ENCODE measurements at regions of chr2 and their contacts with region 1.

Region 1: GRCh38 chr2:232327105-232328041 is 51.2 kb upstream of the ALPP start:
- DNase-seq: peak; percentile 96
- H3K4me3 Mint-ChIP-seq: no peak overlapping the region
- H3K27ac Mint-ChIP-seq: no peak overlapping the region
- H3K4me1 Mint-ChIP-seq: peaks cover 6% of the 10 kb centered on the region
- H3K27me3 Mint-ChIP-seq: no peaks in the 10 kb centered on the region

Region 2: DNA sequence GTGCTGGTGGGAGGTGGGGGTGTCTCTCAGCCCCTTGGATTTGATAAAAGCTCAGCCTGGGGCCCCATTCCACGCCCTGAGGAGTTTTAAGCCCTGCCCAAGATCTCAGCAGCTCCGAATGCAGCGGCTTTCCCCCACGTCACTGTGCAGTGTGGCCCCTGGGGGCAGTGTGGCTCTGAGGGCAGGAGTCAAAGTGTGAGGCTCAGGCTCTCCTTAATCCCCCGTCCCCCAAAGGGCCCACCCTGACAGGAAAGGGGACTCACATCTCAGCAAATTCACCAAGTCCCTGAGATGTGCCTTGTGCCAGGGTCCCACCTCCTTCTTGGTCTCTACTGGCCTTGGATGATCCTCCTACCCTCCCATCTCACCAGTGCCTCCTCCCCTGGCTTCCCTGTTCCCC is 426.4 kb before region 1 on chr2:
- intact Hi-C with region 1: loop called (anchors 1 kb)
- DNase-seq: no peak
- H3K4me3 Mint-ChIP-seq: no peak overlapping the region
- H3K27ac Mint-ChIP-seq: no peak overlapping the region
- H3K4me1 Mint-ChIP-seq: no peaks in the 10 kb centered on the region
- H3K27me3 Mint-ChIP-seq: peaks cover 6% of the 10 kb centered on the region

Region 3: DNA sequence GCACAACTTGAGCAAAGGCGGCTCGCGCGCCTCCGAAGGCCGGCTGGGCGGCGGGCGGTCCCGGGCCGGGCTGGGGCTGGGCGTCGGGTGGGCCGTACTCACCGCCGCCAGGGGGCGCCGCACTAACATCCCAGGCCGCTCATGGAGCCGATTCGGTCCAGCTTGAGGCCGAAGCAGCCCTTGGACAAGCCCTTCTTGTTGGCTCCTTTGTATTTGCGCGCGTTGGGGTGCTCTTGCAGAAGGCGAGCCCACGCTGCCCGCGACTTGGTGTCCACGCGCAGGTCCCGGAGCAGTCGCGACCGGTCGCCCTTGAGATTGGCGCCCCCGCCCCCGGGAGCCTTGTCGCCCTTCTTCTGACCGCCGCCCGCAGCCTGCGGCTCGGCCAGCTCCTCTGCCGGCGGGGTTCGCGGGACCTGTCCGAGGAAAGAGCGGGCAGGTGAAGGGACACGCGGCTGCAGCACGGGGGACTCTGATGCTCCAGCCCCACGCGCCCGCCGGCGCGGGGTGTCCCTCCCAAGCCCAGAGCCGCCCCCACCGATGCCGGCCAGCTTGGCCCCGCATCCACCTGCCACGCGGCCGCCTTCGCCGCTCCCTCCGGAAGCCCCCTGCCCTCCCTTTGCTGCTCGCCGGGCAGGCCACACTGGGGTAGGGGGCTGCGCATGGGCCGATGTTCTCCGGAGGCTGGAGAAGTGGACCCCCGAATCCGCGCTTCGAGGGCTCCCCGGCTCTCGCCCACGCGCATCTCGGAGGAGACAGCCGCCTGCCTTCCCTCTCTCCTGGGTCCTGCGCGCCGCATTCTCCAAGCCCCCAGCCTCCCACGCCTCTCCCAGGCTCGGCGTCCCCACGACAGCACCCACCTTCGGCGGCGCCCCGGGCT is 401.8 kb before region 1 on chr2:
- intact Hi-C with region 1: loop called (anchors 1 kb)
- DNase-seq: peak; percentile 91
- H3K4me3 Mint-ChIP-seq: peak overlapping the region; percentile 51
- H3K27ac Mint-ChIP-seq: no peak overlapping the region
- H3K4me1 Mint-ChIP-seq: peaks cover 10% of the 10 kb centered on the region
- H3K27me3 Mint-ChIP-seq: peaks cover 53% of the 10 kb centered on the region

Region 4: GRCh38 chr2:232365621-232366321 is 38.4 kb after region 1 on chr2:
- intact Hi-C with region 1: no loop called
- DNase-seq: peak; percentile 78
- H3K4me3 Mint-ChIP-seq: no peak overlapping the region
- H3K27ac Mint-ChIP-seq: no peak overlapping the region
- H3K4me1 Mint-ChIP-seq: peaks cover 18% of the 10 kb centered on the region
- H3K27me3 Mint-ChIP-seq: no peaks in the 10 kb centered on the region

Measured in activated CD4-positive, alpha-beta T cell treated with anti-CD3 and anti-CD28 coated beads, Interleukin-2, amount 10 ng/mL, durations not matched to agents 24 days and 14 days (primary cell).